ENCODE measurements at regions of chr20 and their contacts with region 1.

Region 1: GRCh38 chr20:43721429-43722152 is 5.2 kb downstream of the GTSF1L start:
- DNase-seq: no peak
- H3K4me3 Mint-ChIP-seq: peak overlapping the region; percentile 65
- H3K27ac Mint-ChIP-seq: peak overlapping the region; percentile 85
- H3K4me1 Mint-ChIP-seq: peaks cover 34% of the 10 kb centered on the region
- H3K27me3 Mint-ChIP-seq: no peaks in the 10 kb centered on the region

Region 2: DNA sequence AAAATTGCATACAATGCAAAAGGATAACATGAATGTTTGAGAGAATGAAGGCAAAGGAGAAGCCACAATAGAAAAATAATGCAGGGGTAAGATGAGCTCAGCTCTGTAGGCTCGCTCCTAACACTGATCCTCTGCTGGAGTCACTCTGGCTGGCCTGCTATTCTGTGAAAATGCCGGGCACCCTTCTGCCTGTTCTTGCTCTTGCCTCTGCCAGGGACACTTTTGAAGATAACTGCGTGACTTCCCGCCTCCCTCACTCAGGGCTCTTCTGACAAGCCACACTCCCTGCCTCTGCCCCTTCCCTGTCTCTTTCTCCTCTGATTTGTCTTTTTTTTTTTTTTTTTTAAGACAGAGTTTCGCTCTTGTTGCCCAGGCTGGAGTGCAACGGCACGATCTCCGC is 90.0 kb before region 1 on chr20:
- intact Hi-C with region 1: no loop called
- DNase-seq: no peak
- H3K4me3 Mint-ChIP-seq: no peak overlapping the region
- H3K27ac Mint-ChIP-seq: no peak overlapping the region
- H3K4me1 Mint-ChIP-seq: peaks cover 5% of the 10 kb centered on the region
- H3K27me3 Mint-ChIP-seq: no peaks in the 10 kb centered on the region

Region 3: DNA sequence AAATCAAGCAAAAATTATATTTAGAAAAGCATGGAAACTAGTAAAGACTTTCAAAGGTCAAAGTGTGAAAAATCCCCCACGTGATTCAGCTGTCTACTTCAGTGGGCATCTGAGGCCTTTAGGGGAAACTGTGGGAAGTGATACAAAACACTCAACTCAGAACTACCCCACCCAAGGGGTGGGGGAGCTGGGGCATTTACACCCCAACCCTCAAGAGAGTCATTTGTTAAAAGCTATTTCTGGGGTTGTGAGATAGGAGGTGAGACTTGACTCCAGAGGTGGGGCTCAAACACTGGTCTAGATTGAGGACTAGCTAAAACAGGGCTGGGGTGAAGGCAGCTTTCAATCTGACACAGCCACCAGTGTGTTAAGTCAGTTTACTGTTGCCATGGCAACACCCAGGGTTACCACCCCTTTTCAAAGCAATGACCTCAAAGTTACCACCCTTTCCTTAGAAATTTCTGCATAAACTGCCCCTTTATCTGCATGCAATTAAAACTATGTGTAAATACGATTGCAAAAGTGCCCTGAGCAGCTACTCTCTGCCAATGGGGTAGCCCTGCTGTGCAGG is 15.1 kb after region 1 on chr20:
- intact Hi-C with region 1: loop called (anchors 1 kb)
- DNase-seq: peak; percentile 53
- H3K4me3 Mint-ChIP-seq: no peak overlapping the region
- H3K27ac Mint-ChIP-seq: peak overlapping the region; percentile 73
- H3K4me1 Mint-ChIP-seq: peaks cover 44% of the 10 kb centered on the region
- H3K27me3 Mint-ChIP-seq: no peaks in the 10 kb centered on the region

Measured in activated T-helper 1 cell treated with anti-CD3 and anti-CD28 coated beads, Interleukin-12 subunit alpha, Interleukin-12 subunit beta, Interleukin-2, Interleukin-4 antibody, amounts not matched to agents 30 ng/mL and 10 ng/mL and 1 ng/mL, durations not matched to agents 14 hours and 24 hours and 36 hours (primary cell).